Activated naive CD8-positive, alpha-beta T cell treated with anti-CD3 and anti-CD28 coated beads, Interleukin-2, amount 10 ng/mL, durations not matched to agents 7 days and 5 days (primary cell): ENCODE measurements at regions of chr6 and their contacts with region 1.

Region 1: GRCh38 chr6:73461537-73462350 is at the start of gene MTO1:
- DNase-seq: peak; percentile 82
- ATAC-seq: peak; percentile 92
- H3K4me3 Mint-ChIP-seq: peak within 1 kb of the TSS; percentile 95
- H3K27ac Mint-ChIP-seq: peak within 1 kb of the TSS; percentile 99
- H3K4me1 Mint-ChIP-seq: peaks cover 41% of the 10 kb centered on the region
- H3K27me3 Mint-ChIP-seq: no peaks in the 10 kb centered on the region
- total RNA-seq, gene MTO1: 65.4 to 70.4 TPM

Region 2: DNA sequence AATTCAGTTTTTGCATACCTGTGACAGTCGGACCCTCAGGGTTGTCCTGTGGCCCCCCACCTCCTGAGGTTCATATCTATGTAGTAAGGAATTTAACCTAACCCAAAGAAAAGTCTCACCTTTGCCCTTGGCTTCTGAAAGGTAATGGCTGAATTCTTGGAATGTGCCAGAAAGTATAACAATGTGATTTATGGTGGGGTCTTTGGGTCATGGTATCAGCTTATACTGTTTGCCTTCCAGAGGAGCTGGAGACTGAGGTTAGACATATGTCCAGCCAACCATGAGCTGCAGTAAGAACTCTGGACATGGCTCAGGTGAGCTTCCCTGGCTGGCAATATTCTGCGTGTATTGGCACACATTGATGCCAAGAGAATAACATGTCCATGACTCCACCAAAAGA is 40.2 kb before region 1 on chr6:
- POLR2A ChIA-PET with region 1: interaction called, 14 read pairs
- DNase-seq: no peak
- ATAC-seq: no peak
- H3K4me3 Mint-ChIP-seq: peak overlapping the region; percentile 73
- H3K27ac Mint-ChIP-seq: peak overlapping the region; percentile 95
- H3K4me1 Mint-ChIP-seq: peaks cover 27% of the 10 kb centered on the region
- H3K27me3 Mint-ChIP-seq: no peaks in the 10 kb centered on the region

Region 3: GRCh38 chr6:73451223-73452107 is 10.3 kb before region 1 on chr6:
- POLR2A ChIA-PET with region 1: interaction called, 108 read pairs
- DNase-seq: peak; percentile 71
- ATAC-seq: peak; percentile 65
- H3K4me3 Mint-ChIP-seq: peak overlapping the region; percentile 97
- H3K27ac Mint-ChIP-seq: peak overlapping the region; percentile 90
- H3K4me1 Mint-ChIP-seq: peaks cover 34% of the 10 kb centered on the region
- H3K27me3 Mint-ChIP-seq: no peaks in the 10 kb centered on the region

Region 4: GRCh38 chr6:73471686-73472290 is 10.0 kb after region 1 on chr6:
- POLR2A ChIA-PET with region 1: interaction called, 40 read pairs
- DNase-seq: no peak
- ATAC-seq: peak; percentile 51
- H3K4me3 Mint-ChIP-seq: peak overlapping the region; percentile 64
- H3K27ac Mint-ChIP-seq: peak overlapping the region; percentile 79
- H3K4me1 Mint-ChIP-seq: peaks cover 19% of the 10 kb centered on the region
- H3K27me3 Mint-ChIP-seq: no peaks in the 10 kb centered on the region

Region 5: GRCh38 chr6:73585566-73586415 is 124.0 kb after region 1 on chr6:
- POLR2A ChIA-PET with region 1: interaction called, 11 read pairs
- DNase-seq: peak; percentile 40
- ATAC-seq: peak; percentile 85
- H3K4me3 Mint-ChIP-seq: peak overlapping the region; percentile 90
- H3K27ac Mint-ChIP-seq: peak overlapping the region; percentile 99
- H3K4me1 Mint-ChIP-seq: peaks cover 27% of the 10 kb centered on the region
- H3K27me3 Mint-ChIP-seq: no peaks in the 10 kb centered on the region